Colonic mucosa (tissue), 4 donors: ENCODE measurements at regions of chr1 and their contacts with region 1.

Region 1: GRCh38 chr1:99707535-99708142 is 58.8 kb downstream of the FRRS1 start:
- DNase-seq: peak; percentile 74
- H3K4me3 ChIP-seq: no peak overlapping the region
- H3K27ac ChIP-seq: no peak overlapping the region
- H3K4me1 ChIP-seq: no peaks in the 10 kb centered on the region
- H3K27me3 ChIP-seq: no peaks in the 10 kb centered on the region
- CTCF ChIP-seq: peak; percentile 66

Region 2: GRCh38 chr1:99170516-99170915 is 537.1 kb before region 1 on chr1:
- intact Hi-C with region 1: loop called (anchors 10 kb)
- DNase-seq: no peak
- H3K4me3 ChIP-seq: no peak overlapping the region
- H3K27ac ChIP-seq: no peak overlapping the region
- H3K4me1 ChIP-seq: no peaks in the 10 kb centered on the region
- H3K27me3 ChIP-seq: no peaks in the 10 kb centered on the region
- CTCF ChIP-seq: no peak

Region 3: GRCh38 chr1:99820546-99820945 is 112.9 kb after region 1 on chr1:
- intact Hi-C with region 1: no loop called
- DNase-seq: no peak
- H3K4me3 ChIP-seq: no peak overlapping the region
- H3K27ac ChIP-seq: no peak overlapping the region
- H3K4me1 ChIP-seq: no peaks in the 10 kb centered on the region
- H3K27me3 ChIP-seq: no peaks in the 10 kb centered on the region
- CTCF ChIP-seq: no peak